Mammary epithelial cell (primary cell): ENCODE measurements at regions of chrX and their contacts with region 1.

Region 1: GRCh38 chrX:153609917-153610428 is 11.0 kb upstream of the CCNQ start:
- DNase-seq: peak; percentile 21
- H3K4me3 ChIP-seq: peak overlapping the region in 1 of 3 experiments; percentile 27
- H3K27ac ChIP-seq: no peak overlapping the region
- H3K4me1 ChIP-seq: peaks cover 4% of the 10 kb centered on the region
- H3K27me3 ChIP-seq: no peaks in the 10 kb centered on the region
- CTCF ChIP-seq: peak; percentile 48 to 75

Region 2: GRCh38 chrX:153226344-153227185 is 383.4 kb before region 1 on chrX:
- CTCF ChIA-PET with region 1: no interaction called
- dilution Hi-C with region 1: no loop called
- in situ Hi-C with region 1: no loop called
- intact Hi-C with region 1: no loop called
- DNase-seq: peak; percentile 88
- H3K4me3 ChIP-seq: no peak overlapping the region
- H3K27ac ChIP-seq: peak overlapping the region; percentile 22
- H3K4me1 ChIP-seq: peaks cover 4% of the 10 kb centered on the region
- H3K27me3 ChIP-seq: no peaks in the 10 kb centered on the region
- CTCF ChIP-seq: no peak

Region 3: DNA sequence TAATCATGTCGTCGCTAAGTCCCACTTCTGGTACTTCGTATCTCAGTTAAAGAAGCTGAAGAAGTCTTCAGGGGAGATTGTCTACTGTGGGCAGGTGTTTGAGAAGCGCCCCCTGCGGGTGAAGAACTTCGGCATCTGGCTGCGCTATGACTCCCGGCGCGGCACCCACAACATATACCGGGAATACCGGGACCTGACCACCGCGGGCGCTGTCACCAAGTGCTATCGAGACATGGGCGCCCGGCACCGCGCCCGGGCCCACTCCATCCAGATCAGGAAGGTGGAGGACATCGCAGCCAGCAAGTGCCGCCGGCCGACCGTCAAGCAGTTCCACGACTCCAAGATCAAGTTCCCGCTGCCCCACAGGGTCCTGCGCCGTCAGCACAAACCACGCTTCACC is 52.3 kb after region 1 on chrX:
- CTCF ChIA-PET with region 1: no interaction called
- dilution Hi-C with region 1: no loop called
- in situ Hi-C with region 1: loop called in 1 of 2 experiments (anchors 10 kb)
- intact Hi-C with region 1: loop called (anchors 2 kb)
- DNase-seq: no peak
- H3K4me3 ChIP-seq: no peak overlapping the region
- H3K27ac ChIP-seq: no peak overlapping the region
- H3K4me1 ChIP-seq: no peaks in the 10 kb centered on the region
- H3K27me3 ChIP-seq: no peaks in the 10 kb centered on the region
- CTCF ChIP-seq: peak; percentile 16 to 58

Region 4: DNA sequence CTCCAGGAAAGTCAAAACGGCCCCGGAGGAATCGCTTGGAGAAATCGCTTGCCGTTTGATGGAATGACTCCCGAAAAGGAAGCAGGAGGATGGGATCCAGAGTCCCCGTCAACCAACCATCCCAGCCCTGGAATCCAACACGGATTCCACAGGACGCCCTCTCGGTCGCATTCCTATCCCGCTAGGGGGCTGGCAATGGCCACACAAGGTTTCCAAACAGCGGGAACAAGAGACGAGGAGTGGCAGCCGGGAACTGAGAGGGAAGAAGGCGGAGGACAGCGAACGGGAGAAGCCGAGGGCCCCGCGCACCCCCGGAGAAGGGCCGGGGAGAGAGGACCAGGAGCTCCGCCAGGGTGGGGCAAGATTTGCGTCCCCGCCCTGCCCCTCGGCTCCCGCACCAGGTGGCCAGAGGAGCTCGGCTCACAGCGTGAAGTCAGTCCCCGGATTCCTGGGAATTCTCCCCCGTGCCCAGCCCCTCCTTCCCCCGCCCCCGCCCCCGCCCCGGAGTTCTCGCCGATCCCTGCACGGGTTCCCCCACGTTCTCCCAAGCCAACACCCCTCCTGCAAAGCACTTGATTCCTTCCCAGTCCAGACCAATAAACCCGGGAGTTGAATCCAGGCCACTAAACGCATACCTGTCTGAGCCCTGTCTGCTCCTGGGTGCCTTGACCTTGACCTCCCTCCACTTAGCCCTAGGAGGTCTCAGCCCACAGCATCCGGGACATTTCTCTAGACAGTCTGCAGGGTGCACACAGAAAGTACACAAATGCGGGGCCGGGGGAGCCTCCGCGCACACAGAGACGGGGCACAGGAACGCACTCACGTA is 219.0 kb after region 1 on chrX:
- CTCF ChIA-PET with region 1: no interaction called
- dilution Hi-C with region 1: no loop called
- in situ Hi-C with region 1: no loop called
- intact Hi-C with region 1: no loop called
- DNase-seq: no peak
- H3K4me3 ChIP-seq: no peak overlapping the region
- H3K27ac ChIP-seq: no peak overlapping the region
- H3K4me1 ChIP-seq: no peaks in the 10 kb centered on the region
- H3K27me3 ChIP-seq: peaks cover 17% of the 10 kb centered on the region
- CTCF ChIP-seq: no peak